ENCODE measurements at regions of chr10 and their contacts with region 1.

Region 1: DNA sequence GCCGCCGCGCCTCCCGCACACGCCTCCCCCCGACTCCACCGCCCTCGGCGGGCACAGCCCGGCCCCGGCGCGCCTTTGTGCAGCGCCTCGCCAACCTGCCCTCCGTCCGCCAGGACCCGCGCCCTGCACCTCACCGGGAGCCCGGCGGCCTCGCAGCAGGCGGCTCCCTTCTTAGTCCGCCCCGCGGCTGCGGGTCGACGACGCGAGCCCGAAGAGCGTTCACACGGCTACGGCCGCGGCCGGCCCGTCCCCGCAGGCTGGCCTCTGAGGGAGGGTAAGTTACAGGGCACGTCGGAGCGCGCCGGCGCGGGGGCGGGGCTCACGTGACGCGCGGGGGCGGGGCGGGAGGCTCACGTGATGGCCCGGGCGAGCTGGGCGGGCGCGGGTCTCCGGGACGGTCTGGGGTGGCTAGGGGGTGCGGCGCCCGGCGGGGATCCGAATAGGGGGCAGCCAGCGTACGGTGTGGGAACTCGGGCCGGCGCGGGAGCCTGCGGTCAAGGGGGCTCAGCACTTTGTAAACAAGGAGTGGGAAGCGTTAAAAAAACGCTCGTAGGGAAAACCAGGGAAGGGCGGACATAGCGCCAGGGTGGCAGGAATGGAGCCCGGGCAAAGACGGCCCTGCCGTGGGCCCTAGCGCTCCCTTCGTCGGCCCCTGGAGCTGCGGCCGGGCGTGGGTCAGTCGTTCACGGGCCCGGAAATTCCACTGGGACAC is at the start of gene ARHGAP12:
- DNase-seq: peak; percentile 84 to 88 (median 85)
- H3K4me3 ChIP-seq: peak within 1 kb of the TSS; percentile 86 to 91
- H3K4me3 Mint-ChIP-seq: peak within 1 kb of the TSS; percentile 93 to 95 (median 93)
- H3K27ac ChIP-seq: peak within 1 kb of the TSS; percentile 66
- H3K27ac Mint-ChIP-seq: peak within 1 kb of the TSS; percentile 66 to 97 (median 93)
- H3K4me1 ChIP-seq: peaks cover 54% of the 10 kb centered on the region
- H3K4me1 Mint-ChIP-seq: peaks cover 36 to 51% (median 44%) of the 10 kb centered on the region in 4 donors
- H3K27me3 ChIP-seq: no peaks in the 10 kb centered on the region
- H3K27me3 Mint-ChIP-seq: no peaks in the 10 kb centered on the region
- total RNA-seq, gene ARHGAP12: 30.1 to 31.2 TPM

Region 2: DNA sequence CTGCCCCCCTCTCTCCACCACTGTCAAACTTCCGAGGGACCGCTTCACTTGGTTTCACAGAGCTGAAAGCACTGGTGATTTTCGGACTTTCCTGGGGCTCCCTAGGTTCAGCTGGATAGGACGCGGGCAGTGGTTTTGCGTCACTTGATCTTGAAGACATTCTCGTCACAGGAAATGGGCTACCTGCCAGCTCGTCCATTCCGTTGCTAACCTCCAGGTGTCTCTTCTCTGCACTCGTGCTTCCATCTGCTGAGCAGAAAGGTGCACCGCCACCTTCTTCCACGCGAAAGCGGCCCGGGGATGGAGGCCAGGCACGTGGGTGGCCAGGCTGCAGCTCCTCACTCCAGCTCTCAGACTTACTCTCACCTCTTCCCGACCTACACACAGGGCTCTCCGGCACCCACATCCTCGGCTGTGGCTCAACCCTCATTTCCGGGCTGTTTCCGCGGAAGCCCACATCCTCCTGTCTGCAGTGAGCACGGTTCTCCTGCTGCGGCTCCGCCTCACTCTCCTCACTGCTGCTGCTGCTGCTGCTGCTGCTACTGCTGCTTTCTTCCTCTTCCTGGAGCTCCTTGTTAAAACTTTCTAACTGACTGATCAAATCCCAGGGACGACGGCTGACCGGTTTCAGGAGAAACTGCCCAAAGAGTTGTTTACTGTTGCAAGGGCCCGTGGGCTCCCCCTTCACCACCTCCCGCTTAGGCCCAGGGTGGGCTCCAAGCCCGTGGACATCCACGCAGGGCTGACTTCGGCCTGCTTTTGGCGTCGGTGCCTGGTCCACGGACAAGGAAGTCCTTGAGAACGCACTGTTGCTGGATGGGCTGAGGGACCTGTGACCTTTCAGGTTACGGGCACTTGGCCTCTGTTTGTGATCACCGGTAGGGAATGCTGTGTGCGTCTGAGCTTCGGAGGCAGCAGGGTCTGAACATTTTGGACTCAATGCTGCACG is 1901.4 kb before region 1 on chr10:
- CTCF ChIA-PET with region 1: no interaction called
- POLR2A ChIA-PET with region 1: no interaction called
- intact Hi-C with region 1: loop called (anchors 10 kb)
- DNase-seq: peak; percentile 91 to 98 (median 95)
- H3K4me3 ChIP-seq: peak overlapping the region; percentile 19 to 61
- H3K4me3 Mint-ChIP-seq: peak overlapping the region; percentile 69 to 91 (median 80)
- H3K27ac ChIP-seq: no peak overlapping the region
- H3K27ac Mint-ChIP-seq: peak overlapping the region; percentile 92 to 98 (median 94)
- H3K4me1 ChIP-seq: peaks cover 33% of the 10 kb centered on the region
- H3K4me1 Mint-ChIP-seq: peaks cover 20 to 47% (median 36%) of the 10 kb centered on the region in 4 donors
- H3K27me3 ChIP-seq: peaks cover 12% of the 10 kb centered on the region
- H3K27me3 Mint-ChIP-seq: peaks cover 33 to 36% of the 10 kb centered on the region in 2 donors

Region 3: DNA sequence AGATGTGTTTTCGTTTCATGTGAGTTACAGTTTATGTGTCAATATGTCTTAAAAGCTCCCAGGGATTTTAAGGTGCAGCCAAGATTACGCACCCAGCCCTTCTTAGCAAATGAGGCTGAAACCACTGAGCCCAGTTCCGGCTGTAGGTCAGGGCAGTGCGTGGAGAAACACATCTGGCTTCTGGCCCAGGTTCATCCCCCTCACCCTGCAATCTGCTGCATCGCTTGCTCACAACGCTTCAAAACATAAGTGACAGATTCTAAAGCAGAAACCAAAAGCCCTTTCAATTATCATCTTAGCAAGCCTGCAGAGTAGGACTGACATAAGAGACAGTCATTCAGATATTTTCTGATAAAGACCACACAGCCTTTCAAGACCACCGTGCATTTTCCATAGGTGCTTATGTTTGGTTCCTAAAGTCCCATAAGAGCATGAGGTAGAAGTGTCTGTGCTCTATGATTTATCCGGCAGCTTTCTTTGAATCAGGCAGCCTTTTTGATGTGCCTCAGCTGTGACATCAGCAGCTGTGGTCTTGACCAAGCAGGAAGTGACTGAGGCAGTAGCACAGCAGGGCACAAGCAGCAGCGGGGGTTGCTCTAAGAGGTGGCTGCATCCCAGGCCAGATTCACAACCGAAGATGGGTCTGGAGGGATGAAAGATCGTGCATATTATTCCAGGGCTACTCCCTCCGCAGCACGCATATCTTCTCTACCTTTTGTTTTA is 1227.1 kb before region 1 on chr10:
- CTCF ChIA-PET with region 1: no interaction called
- POLR2A ChIA-PET with region 1: no interaction called
- intact Hi-C with region 1: loop called (anchors 5 kb)
- DNase-seq: peak; percentile 75 to 88 (median 78)
- H3K4me3 ChIP-seq: peak overlapping the region in 1 of 2 donors; percentile 28
- H3K4me3 Mint-ChIP-seq: peak overlapping the region; percentile 78 to 88 (median 84)
- H3K27ac ChIP-seq: peak overlapping the region; percentile 59
- H3K27ac Mint-ChIP-seq: peak overlapping the region; percentile 90 to 98 (median 95)
- H3K4me1 ChIP-seq: peaks cover 89% of the 10 kb centered on the region
- H3K4me1 Mint-ChIP-seq: peaks cover 53 to 90% (median 77%) of the 10 kb centered on the region in 4 donors
- H3K27me3 ChIP-seq: no peaks in the 10 kb centered on the region
- H3K27me3 Mint-ChIP-seq: no peaks in the 10 kb centered on the region

Region 4: GRCh38 chr10:31759799-31760626 is 168.7 kb before region 1 on chr10:
- CTCF ChIA-PET with region 1: no interaction called
- POLR2A ChIA-PET with region 1: no interaction called
- intact Hi-C with region 1: loop called (anchors 5 kb)
- DNase-seq: peak; percentile 92 to 99 (median 97)
- H3K4me3 ChIP-seq: peak overlapping the region; percentile 66 to 90
- H3K4me3 Mint-ChIP-seq: peak overlapping the region; percentile 75 to 92 (median 86)
- H3K27ac ChIP-seq: peak overlapping the region; percentile 78
- H3K27ac Mint-ChIP-seq: peak overlapping the region; percentile 94 to 99 (median 99)
- H3K4me1 ChIP-seq: peaks cover 10% of the 10 kb centered on the region
- H3K4me1 Mint-ChIP-seq: peaks cover 9 to 17% (median 13%) of the 10 kb centered on the region in 4 donors
- H3K27me3 ChIP-seq: no peaks in the 10 kb centered on the region
- H3K27me3 Mint-ChIP-seq: no peaks in the 10 kb centered on the region

Region 5: GRCh38 chr10:31886885-31887284 is 41.8 kb before region 1 on chr10:
- CTCF ChIA-PET with region 1: no interaction called
- POLR2A ChIA-PET with region 1: no interaction called
- intact Hi-C with region 1: loop called (anchors 5 kb)
- DNase-seq: no peak
- H3K4me3 ChIP-seq: no peak overlapping the region
- H3K4me3 Mint-ChIP-seq: no peak overlapping the region
- H3K27ac ChIP-seq: no peak overlapping the region
- H3K27ac Mint-ChIP-seq: no peak overlapping the region
- H3K4me1 ChIP-seq: no peaks in the 10 kb centered on the region
- H3K4me1 Mint-ChIP-seq: peaks cover 19 to 32% (median 23%) of the 10 kb centered on the region in 4 donors
- H3K27me3 ChIP-seq: no peaks in the 10 kb centered on the region
- H3K27me3 Mint-ChIP-seq: no peaks in the 10 kb centered on the region

Region 6: DNA sequence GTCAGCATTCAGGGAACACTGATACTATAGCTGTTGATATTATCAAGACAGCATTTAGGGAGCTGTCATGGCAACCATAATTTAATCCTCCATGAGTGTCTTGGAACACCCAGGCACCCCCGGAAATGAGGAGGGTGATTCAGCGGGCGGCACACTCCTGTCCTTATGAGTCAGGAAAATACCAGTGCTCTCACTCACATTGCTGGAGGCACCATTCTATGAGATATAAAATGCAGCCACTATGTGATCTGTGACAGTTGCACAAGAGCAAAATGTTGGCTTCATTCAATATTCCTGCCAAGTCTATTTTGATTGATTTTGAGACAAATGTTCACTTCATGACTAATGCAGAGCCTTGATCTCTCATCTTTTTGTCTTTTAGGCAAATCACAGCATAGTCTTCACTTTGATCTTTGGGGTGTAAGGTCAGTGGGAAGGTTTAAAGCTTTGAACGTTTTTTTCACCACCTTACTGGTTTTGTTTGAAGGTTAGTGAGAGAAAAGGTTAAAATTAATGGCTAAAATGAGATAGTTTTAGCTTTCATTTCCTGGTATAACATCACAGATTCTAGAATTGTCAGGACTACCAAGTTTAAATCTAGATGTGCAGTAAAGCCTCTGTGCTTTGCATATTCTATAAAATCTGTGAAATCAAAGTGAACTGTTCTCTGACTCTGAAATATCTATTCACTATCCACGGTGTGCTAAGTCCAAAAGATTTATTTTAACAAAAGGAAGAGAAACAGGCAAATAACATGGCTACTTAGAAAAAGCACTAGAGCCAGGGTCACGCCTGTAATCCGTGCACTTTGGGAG is 12.3 kb after region 1 on chr10:
- CTCF ChIA-PET with region 1: no interaction called
- POLR2A ChIA-PET with region 1: no interaction called
- intact Hi-C with region 1: no loop called
- DNase-seq: no peak
- H3K4me3 ChIP-seq: no peak overlapping the region
- H3K4me3 Mint-ChIP-seq: no peak overlapping the region
- H3K27ac ChIP-seq: no peak overlapping the region
- H3K27ac Mint-ChIP-seq: no peak overlapping the region
- H3K4me1 ChIP-seq: no peaks in the 10 kb centered on the region
- H3K4me1 Mint-ChIP-seq: peaks cover 0 to 4% (median 4%) of the 10 kb centered on the region in 4 donors
- H3K27me3 ChIP-seq: no peaks in the 10 kb centered on the region
- H3K27me3 Mint-ChIP-seq: no peaks in the 10 kb centered on the region

Region 7: GRCh38 chr10:32005050-32005449 is 76.3 kb after region 1 on chr10:
- CTCF ChIA-PET with region 1: interaction called, 9 read pairs
- POLR2A ChIA-PET with region 1: interaction called, 5 read pairs
- intact Hi-C with region 1: loop called (anchors 1 kb)
- DNase-seq: peak in 4 of 5 donors; percentile 28 to 39 (median 36)
- H3K4me3 ChIP-seq: no peak overlapping the region
- H3K4me3 Mint-ChIP-seq: no peak overlapping the region
- H3K27ac ChIP-seq: no peak overlapping the region
- H3K27ac Mint-ChIP-seq: peak overlapping the region in 3 of 7 donors; percentile 13 to 25 (median 14)
- H3K4me1 ChIP-seq: no peaks in the 10 kb centered on the region
- H3K4me1 Mint-ChIP-seq: peaks cover 2 to 12% (median 9%) of the 10 kb centered on the region in 4 donors
- H3K27me3 ChIP-seq: no peaks in the 10 kb centered on the region
- H3K27me3 Mint-ChIP-seq: no peaks in the 10 kb centered on the region

Region 8: GRCh38 chr10:32055813-32056600 is 127.3 kb after region 1 on chr10 and contains the start of gene KIF5B:
- CTCF ChIA-PET with region 1: no interaction called
- POLR2A ChIA-PET with region 1: interaction called, 5 read pairs
- intact Hi-C with region 1: loop called (anchors 1 kb)
- DNase-seq: peak; percentile 81 to 92 (median 88)
- H3K4me3 ChIP-seq: peak within 1 kb of the TSS; percentile 88 to 93
- H3K4me3 Mint-ChIP-seq: peak within 1 kb of the TSS; percentile 95 to 99 (median 98)
- H3K27ac ChIP-seq: peak within 1 kb of the TSS; percentile 81
- H3K27ac Mint-ChIP-seq: peak within 1 kb of the TSS; percentile 94 to 97 (median 95)
- H3K4me1 ChIP-seq: peaks cover 49% of the 10 kb centered on the region
- H3K4me1 Mint-ChIP-seq: peaks cover 30 to 54% (median 44%) of the 10 kb centered on the region in 4 donors
- H3K27me3 ChIP-seq: no peaks in the 10 kb centered on the region
- H3K27me3 Mint-ChIP-seq: no peaks in the 10 kb centered on the region
- total RNA-seq, gene KIF5B: 54.8 to 55.6 TPM